B cell (primary cell): ENCODE measurements at regions of chrX and their contacts with region 1.

Region 1: GRCh38 chrX:34687095-34687494 is 30.0 kb upstream of the TMEM47 start:
- DNase-seq: no peak
- ATAC-seq: no peak
- H3K4me3 ChIP-seq: no peak overlapping the region
- H3K4me3 Mint-ChIP-seq: no peak overlapping the region
- H3K27ac ChIP-seq: no peak overlapping the region
- H3K27ac Mint-ChIP-seq: no peak overlapping the region
- H3K4me1 ChIP-seq: no peaks in the 10 kb centered on the region
- H3K4me1 Mint-ChIP-seq: no peaks in the 10 kb centered on the region
- H3K27me3 ChIP-seq: no peaks in the 10 kb centered on the region
- H3K27me3 Mint-ChIP-seq: no peaks in the 10 kb centered on the region
- CTCF ChIP-seq: no peak

Region 2: GRCh38 chrX:34653811-34654210 is 33.3 kb before region 1 on chrX:
- CTCF ChIA-PET with region 1: no interaction called
- POLR2A ChIA-PET with region 1: no interaction called
- intact Hi-C with region 1: loop called (anchors 1 kb)
- DNase-seq: no peak
- ATAC-seq: no peak
- H3K4me3 ChIP-seq: no peak overlapping the region
- H3K4me3 Mint-ChIP-seq: no peak overlapping the region
- H3K27ac ChIP-seq: no peak overlapping the region
- H3K27ac Mint-ChIP-seq: no peak overlapping the region
- H3K4me1 ChIP-seq: no peaks in the 10 kb centered on the region
- H3K4me1 Mint-ChIP-seq: peaks cover 4% of the 10 kb centered on the region
- H3K27me3 ChIP-seq: peaks cover 0 to 3% (median 1%) of the 10 kb centered on the region in 4 experiments
- H3K27me3 Mint-ChIP-seq: peaks cover 14% of the 10 kb centered on the region
- CTCF ChIP-seq: no peak

Region 3: DNA sequence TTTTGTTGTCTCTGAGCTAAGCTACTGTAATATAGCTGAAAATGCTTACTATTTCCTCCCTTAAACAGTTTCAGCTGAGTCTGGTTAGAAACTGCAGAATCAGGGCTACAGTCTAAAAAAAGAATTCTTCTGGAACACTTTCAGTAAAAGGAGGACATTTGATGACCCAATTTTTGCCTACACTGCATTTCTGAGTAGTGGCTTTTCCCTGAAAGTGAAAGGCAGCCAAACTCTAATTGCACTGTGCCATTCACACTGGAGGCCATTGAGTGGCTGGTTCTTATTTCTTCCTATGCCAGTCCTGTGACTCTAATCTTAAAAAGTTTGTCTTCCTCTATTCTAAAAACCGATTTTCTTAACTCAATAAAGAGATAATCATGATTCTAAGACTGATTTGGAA is 1758.5 kb after region 1 on chrX:
- CTCF ChIA-PET with region 1: no interaction called
- POLR2A ChIA-PET with region 1: no interaction called
- intact Hi-C with region 1: no loop called
- DNase-seq: no peak
- ATAC-seq: no peak
- H3K4me3 ChIP-seq: no peak overlapping the region
- H3K4me3 Mint-ChIP-seq: no peak overlapping the region
- H3K27ac ChIP-seq: no peak overlapping the region
- H3K27ac Mint-ChIP-seq: no peak overlapping the region
- H3K4me1 ChIP-seq: no peaks in the 10 kb centered on the region
- H3K4me1 Mint-ChIP-seq: no peaks in the 10 kb centered on the region
- H3K27me3 ChIP-seq: no peaks in the 10 kb centered on the region
- H3K27me3 Mint-ChIP-seq: no peaks in the 10 kb centered on the region
- CTCF ChIP-seq: no peak